Left cardiac atrium (tissue), 4 donors: ENCODE measurements at regions of chr5 and their contacts with region 1.

Region 1: GRCh38 chr5:104139840-104140239 is 577.3 kb upstream of the NUDT12 start:
- DNase-seq: no peak
- ATAC-seq: no peak

Region 2: GRCh38 chr5:104095527-104095926 is 44.3 kb before region 1 on chr5:
- intact Hi-C with region 1: loop called in 1 of 2 experiments (anchors 2 kb)
- DNase-seq: no peak
- ATAC-seq: no peak

Region 3: GRCh38 chr5:104265531-104266140 is 125.8 kb after region 1 on chr5:
- intact Hi-C with region 1: no loop called
- DNase-seq: no peak
- ATAC-seq: no peak